ENCODE measurements at regions of chr15 and their contacts with region 1.

Region 1: DNA sequence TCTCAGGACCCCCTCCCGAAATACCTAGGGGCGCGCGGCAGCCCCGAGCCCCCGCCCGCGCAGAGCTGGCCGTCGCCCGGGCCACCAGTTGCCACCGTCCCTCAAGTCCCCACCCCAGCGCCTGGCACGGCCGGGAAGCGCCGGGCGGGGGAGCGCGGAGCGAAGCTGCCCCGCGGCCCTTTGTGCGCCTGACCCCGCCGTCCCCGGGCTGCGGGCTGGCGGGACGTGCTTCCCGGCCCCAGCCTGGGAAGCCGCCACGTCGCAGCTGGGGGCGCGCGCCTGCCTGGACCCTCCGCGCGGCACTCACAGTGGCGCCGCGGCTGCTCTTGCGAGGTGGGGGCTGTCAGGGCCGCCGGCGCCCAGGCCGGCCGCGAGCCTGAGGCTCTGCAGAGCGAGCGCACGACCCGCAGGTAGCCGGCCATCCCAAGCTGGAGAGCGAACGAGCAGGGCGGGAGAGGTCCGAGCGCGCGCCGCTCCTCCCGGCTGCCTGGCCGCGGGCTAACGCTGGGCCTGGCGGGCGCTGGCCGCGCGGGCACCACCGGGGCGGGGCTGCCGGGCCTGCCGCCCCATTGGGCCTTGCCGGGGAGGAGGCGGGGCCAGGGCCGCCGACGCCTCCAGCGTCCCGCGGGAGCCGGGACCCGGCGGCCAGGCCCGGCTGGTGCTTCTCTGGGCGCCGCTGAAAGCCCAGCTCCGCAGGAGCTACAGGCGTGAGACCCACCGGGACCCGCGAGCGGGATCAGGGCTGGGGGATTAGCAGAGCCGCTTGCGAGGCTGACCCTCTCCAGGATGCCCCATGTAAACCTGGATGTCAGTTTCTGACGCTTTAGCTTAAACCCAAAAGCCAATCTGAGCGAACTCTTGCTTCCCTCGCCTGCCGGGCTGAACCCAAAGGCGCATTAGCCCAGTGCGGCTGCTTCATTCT is at the start of gene IDH2:
- DNase-seq: peak; percentile 88
- ATAC-seq: peak; percentile 83
- total RNA-seq, gene IDH2: 1,067 TPM

Region 2: GRCh38 chr15:88454867-88455810 is 1647.1 kb before region 1 on chr15:
- intact Hi-C with region 1: no loop called
- DNase-seq: peak; percentile 63
- ATAC-seq: peak; percentile 90

Region 3: DNA sequence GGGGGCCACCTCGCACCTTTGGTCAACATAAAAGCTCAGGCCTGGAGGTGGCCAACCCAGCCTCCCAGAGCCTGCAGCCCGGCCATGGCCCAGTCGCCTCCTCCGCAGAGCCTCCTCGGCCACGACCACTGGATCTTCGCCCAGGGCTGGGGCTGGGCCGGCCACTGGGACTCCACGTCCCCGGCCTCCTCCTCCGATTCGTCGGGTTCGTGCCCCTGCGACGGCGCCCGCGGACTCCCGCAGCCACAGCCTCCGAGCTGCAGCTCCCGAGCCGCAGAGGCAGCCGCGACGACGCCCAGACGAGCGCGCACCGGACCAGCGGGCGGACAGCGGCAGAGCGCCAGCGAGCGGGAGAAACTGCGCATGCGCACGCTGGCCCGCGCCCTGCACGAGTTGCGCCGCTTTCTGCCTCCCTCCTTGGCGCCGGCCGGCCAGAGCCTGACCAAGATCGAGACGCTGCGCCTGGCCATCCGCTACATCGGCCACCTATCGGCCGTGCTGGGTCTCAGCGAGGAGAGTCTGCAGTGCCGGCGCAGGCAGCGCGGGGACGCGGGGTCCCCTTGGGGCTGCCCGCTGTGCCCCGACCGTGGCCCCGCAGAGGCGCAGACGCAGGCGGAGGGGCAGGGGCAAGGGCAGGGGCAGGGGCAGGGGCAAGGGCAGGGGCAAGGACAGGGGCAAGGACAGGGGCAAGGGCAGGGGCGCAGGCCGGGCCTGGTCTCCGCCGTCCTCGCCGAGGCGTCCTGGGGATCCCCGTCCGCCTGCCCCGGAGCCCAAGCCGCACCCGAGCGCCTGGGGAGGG is 325.8 kb before region 1 on chr15 and contains the start of gene MESP2:
- intact Hi-C with region 1: no loop called
- DNase-seq: peak; percentile 93
- ATAC-seq: peak; percentile 96
- total RNA-seq, gene MESP2: 0.13 TPM

Region 4: GRCh38 chr15:89888214-89888804 is 213.9 kb before region 1 on chr15:
- intact Hi-C with region 1: no loop called
- DNase-seq: no peak
- ATAC-seq: no peak

Region 5: DNA sequence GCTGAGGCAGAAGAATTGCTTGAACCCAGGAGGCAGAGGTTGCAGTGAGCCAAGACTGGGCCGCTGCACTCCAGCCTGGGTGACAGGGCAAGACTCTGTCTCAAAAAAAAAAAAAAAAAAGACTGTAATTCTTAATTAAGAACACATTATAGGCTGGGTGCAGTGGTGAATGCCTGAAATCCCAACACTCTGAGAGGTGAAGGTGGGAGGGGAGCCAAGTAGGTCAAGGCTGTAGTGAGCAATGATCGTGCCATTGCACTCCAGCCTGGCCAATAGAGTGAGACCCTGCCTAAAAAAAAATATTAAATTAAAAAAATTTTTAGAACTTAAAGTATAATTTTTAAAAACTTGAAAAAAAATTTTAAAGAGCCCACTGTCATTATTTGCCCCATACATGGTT is 176.1 kb before region 1 on chr15:
- intact Hi-C with region 1: no loop called
- DNase-seq: no peak
- ATAC-seq: no peak

Region 6: DNA sequence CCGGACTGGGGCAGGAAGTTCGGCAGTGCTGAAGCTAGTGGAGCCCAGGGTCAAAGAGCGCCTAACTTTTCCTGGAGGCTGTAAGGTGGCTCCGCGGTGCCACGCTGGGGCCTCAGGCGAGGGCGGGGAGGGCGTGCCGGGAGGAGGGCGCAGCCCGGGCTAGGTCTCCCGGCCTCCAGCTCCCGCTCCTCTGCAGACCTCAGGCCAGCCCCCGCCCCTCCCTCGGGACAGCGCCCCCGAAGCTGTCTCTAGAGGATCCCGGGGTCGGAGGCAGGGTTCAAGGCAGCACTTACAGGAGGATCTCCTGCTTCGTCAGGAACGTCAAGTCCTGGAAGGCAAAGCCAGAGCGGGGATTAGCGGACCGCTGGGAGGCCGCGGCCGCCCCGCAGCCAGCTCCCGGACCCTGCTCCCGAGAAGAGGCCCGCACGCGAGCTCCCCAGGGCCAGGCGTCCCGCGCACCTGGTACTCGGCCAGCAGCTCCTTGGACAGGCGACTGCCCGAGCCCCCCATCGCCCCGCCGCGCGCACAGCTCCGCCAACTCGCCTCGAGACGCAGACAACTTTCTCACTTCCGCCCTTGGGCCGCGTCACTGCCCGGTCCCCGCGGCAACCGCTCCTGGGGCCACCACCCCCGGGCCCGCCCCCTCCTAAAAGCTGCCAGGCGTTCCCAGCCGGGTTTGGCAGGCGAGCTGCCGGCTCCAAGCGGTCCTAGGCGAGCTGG is 131.3 kb after region 1 on chr15 and contains the start of gene CIB1:
- intact Hi-C with region 1: loop called (anchors 5 kb)
- DNase-seq: peak; percentile 99
- ATAC-seq: peak; percentile 94
- total RNA-seq, gene CIB1: 71.6 TPM